ENCODE measurements at regions of chr9 and their contacts with region 1.

Region 1: GRCh38 chr9:2014696-2015580 is at the start of gene SMARCA2:
- DNase-seq: peak; percentile 99
- H3K4me3 Mint-ChIP-seq: peak within 1 kb of the TSS; percentile 98
- H3K27ac Mint-ChIP-seq: peak within 1 kb of the TSS; percentile 97
- H3K4me1 Mint-ChIP-seq: peaks cover 44% of the 10 kb centered on the region
- H3K27me3 Mint-ChIP-seq: peaks cover 11% of the 10 kb centered on the region
- total RNA-seq, gene SMARCA2: 91.4 and 100.0 TPM in 2 replicates

Region 2: GRCh38 chr9:272251-273213 is 1742.4 kb before region 1 on chr9:
- intact Hi-C with region 1: loop called (anchors 10 kb)
- DNase-seq: peak; percentile 93
- H3K4me3 Mint-ChIP-seq: peak overlapping the region; percentile 94
- H3K27ac Mint-ChIP-seq: peak overlapping the region; percentile 99
- H3K4me1 Mint-ChIP-seq: peaks cover 46% of the 10 kb centered on the region
- H3K27me3 Mint-ChIP-seq: no peaks in the 10 kb centered on the region

Region 3: GRCh38 chr9:1829719-1830118 is 185.2 kb before region 1 on chr9:
- intact Hi-C with region 1: no loop called
- DNase-seq: no peak
- H3K4me3 Mint-ChIP-seq: no peak overlapping the region
- H3K27ac Mint-ChIP-seq: no peak overlapping the region
- H3K4me1 Mint-ChIP-seq: no peaks in the 10 kb centered on the region
- H3K27me3 Mint-ChIP-seq: peaks cover 18% of the 10 kb centered on the region

Region 4: DNA sequence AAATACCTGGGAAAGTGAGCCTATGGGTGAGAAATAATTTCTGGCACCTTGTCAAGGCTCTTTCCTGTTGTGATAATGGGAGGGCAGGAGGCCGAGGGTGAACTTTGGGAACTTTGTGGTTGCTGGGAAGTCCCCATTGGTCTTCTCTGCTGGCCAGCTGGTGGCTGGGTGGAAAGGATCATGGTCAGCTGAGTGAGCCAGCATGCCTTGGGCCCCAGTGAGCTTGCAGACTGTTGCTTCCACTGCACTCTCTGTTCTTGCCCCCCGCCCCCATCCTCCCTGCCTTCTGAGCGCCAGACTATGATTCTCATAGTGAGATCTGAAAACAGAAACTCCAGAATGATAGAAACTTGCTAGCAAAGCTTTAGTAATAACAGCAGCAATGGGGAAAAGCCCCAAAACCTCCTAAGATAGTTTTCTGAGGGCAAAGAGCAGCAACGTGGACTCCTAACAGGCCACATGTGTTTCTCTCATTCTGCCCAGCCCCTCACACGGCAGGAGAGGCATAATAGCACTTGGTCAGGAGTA is 139.0 kb before region 1 on chr9:
- intact Hi-C with region 1: loop called (anchors 1 kb)
- DNase-seq: peak; percentile 62
- H3K4me3 Mint-ChIP-seq: no peak overlapping the region
- H3K27ac Mint-ChIP-seq: peak overlapping the region; percentile 39
- H3K4me1 Mint-ChIP-seq: peaks cover 12% of the 10 kb centered on the region
- H3K27me3 Mint-ChIP-seq: peaks cover 14% of the 10 kb centered on the region

Region 5: GRCh38 chr9:2087500-2088313 is 72.8 kb after region 1 on chr9:
- intact Hi-C with region 1: loop called (anchors 2 kb)
- DNase-seq: peak; percentile 70
- H3K4me3 Mint-ChIP-seq: no peak overlapping the region
- H3K27ac Mint-ChIP-seq: peak overlapping the region; percentile 5
- H3K4me1 Mint-ChIP-seq: peaks cover 13% of the 10 kb centered on the region
- H3K27me3 Mint-ChIP-seq: no peaks in the 10 kb centered on the region

Region 6: DNA sequence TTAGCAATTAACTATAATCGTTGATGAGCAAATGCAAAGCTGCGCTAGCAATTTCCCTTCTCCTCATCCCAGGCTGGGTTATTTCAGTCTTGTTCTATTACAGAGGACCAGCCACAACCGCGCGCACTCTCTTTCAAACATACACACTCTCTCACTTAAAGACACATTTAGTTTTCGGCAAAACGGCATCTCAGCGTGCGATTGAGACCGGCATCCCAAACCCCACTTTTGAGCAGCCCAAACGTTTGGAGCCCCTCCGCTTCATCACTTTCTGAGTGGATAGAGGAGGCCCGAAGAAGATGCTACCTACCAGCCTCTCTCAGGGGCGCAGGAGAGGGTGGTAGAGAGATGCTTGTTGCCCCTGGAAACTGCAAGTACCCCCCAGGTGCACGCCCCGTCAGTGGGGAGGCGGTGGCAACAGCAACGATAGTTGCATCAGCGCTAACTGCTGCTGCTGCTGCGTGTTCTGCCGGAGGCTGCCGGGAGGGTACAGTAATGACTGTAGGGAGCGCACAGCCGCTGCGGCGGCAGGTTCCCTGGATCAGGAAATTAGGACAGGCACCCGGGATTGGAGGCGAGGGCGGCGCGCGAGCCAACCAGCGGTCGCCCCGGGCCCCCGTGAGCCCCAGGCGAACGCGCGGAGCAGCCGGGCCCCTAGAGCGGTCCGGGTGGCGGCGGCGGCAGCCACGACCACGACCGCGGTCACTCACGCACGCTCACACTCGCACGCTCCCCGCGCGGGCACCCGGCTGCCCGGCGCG is 606.2 kb after region 1 on chr9:
- intact Hi-C with region 1: loop called (anchors 10 kb)
- DNase-seq: peak; percentile 85
- H3K4me3 Mint-ChIP-seq: peak overlapping the region; percentile 87
- H3K27ac Mint-ChIP-seq: peak overlapping the region; percentile 84
- H3K4me1 Mint-ChIP-seq: peaks cover 16% of the 10 kb centered on the region
- H3K27me3 Mint-ChIP-seq: peaks cover 43% of the 10 kb centered on the region